Calu3 (cell line): ENCODE measurements at regions of chr22 and their contacts with region 1.

Region 1: GRCh38 chr22:37591823-37592404 is 12.0 kb upstream of the LGALS2 start:
- DNase-seq: no peak
- H3K4me3 Mint-ChIP-seq: peak overlapping the region; percentile 20
- H3K27ac Mint-ChIP-seq: peak overlapping the region; percentile 24
- H3K4me1 Mint-ChIP-seq: peaks cover 30% of the 10 kb centered on the region
- H3K27me3 Mint-ChIP-seq: no peaks in the 10 kb centered on the region
- CTCF ChIP-seq: no peak

Region 2: GRCh38 chr22:37492428-37493344 is 99.2 kb before region 1 on chr22:
- CTCF ChIA-PET with region 1: no interaction called
- intact Hi-C with region 1: no loop called
- DNase-seq: peak; percentile 52
- H3K4me3 Mint-ChIP-seq: no peak overlapping the region
- H3K27ac Mint-ChIP-seq: no peak overlapping the region
- H3K4me1 Mint-ChIP-seq: peaks cover 22% of the 10 kb centered on the region
- H3K27me3 Mint-ChIP-seq: no peaks in the 10 kb centered on the region
- CTCF ChIP-seq: peak; percentile 56

Region 3: DNA sequence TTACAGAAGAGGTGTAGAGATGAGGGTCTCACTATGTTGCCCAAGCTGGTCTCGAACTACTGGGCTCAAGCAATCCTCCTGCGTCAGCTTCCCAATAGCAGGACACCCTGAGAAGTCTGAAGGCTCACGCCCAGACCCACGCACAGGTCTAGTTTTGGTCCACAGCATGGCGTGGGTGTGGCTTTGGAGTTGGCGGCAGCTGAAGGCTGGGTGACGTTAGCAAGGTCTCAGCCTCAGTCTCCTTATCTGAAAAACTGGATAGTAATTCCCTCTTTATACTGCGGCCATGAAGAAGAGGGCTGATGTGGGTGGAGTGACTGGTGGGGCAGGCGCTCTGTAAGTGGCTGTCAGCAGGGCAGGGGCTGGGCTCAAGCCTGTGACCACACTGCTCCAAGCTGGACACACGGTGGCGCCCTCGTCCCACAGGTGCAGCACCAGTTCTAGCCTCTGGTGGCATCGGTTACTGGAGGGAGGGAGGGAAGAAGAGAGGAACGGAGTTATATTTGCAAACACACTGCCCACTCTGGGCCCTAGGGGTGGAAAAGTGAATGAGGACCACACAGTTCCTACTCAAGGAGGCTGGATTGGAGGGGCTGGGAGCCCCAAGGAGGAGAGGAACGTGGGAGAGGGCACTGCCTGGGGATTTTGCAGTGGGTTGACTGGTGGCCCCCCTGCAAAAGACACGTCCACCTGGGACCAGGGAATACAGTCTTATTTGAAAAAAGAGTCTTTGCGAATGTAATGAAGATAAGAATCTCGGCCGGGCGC is 53.1 kb before region 1 on chr22:
- CTCF ChIA-PET with region 1: interaction called, 35 read pairs
- intact Hi-C with region 1: loop called (anchors 2 kb)
- DNase-seq: peak; percentile 97
- H3K4me3 Mint-ChIP-seq: peak overlapping the region; percentile 5
- H3K27ac Mint-ChIP-seq: peak overlapping the region; percentile 52
- H3K4me1 Mint-ChIP-seq: peaks cover 48% of the 10 kb centered on the region
- H3K27me3 Mint-ChIP-seq: no peaks in the 10 kb centered on the region
- CTCF ChIP-seq: peak; percentile 97

Region 4: GRCh38 chr22:37544955-37545699 is 46.8 kb before region 1 on chr22:
- CTCF ChIA-PET with region 1: interaction called, 35 read pairs
- intact Hi-C with region 1: no loop called
- DNase-seq: peak; percentile 89
- H3K4me3 Mint-ChIP-seq: peak overlapping the region; percentile 46
- H3K27ac Mint-ChIP-seq: peak overlapping the region; percentile 30
- H3K4me1 Mint-ChIP-seq: peaks cover 63% of the 10 kb centered on the region
- H3K27me3 Mint-ChIP-seq: no peaks in the 10 kb centered on the region
- CTCF ChIP-seq: peak; percentile 75

Region 5: DNA sequence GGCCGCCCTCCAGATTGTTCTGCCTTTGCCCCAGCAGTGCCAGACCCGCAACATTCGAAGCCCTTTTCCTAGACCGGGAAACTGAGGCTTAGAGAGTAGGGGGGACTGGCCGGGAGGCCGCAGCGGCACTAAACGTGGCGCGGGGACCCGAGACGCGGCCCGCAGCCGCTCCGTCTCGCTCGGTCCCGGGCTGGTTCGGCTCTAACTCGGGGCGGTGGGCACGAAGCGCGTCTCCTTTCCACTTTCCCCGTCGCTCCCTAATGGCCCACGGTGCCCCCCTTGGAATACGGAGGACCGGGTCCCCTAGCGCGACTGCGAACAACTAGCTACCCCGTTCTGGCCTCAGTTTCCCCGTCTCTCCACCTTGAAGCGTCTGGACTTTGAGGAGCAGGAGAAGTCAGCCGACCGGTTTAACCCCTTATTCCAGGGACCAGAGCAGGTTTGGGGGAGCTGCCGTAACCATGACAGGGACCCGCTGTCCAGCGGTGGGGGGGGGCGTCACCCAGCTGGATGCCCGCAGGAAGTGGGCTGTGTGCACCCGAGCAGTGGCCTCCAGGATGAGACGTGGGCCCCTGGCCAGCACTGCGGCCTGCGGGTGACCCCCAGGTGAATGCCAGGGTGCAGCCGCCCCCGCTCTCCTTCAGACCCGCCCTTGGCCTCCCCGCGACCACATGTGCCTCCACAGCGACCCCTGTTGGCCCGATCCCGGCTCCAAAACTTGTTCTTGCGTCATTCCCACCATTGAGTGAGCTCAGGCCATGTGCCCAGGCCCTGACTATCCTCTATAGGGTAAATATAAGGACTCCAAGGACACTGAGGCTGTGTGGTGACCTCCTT is 30.5 kb before region 1 on chr22:
- CTCF ChIA-PET with region 1: interaction called, 48 read pairs
- intact Hi-C with region 1: no loop called
- DNase-seq: peak; percentile 97
- H3K4me3 Mint-ChIP-seq: peak overlapping the region; percentile 87
- H3K27ac Mint-ChIP-seq: peak overlapping the region; percentile 100
- H3K4me1 Mint-ChIP-seq: peaks cover 82% of the 10 kb centered on the region
- H3K27me3 Mint-ChIP-seq: no peaks in the 10 kb centered on the region
- CTCF ChIP-seq: peak; percentile 90

Region 6: DNA sequence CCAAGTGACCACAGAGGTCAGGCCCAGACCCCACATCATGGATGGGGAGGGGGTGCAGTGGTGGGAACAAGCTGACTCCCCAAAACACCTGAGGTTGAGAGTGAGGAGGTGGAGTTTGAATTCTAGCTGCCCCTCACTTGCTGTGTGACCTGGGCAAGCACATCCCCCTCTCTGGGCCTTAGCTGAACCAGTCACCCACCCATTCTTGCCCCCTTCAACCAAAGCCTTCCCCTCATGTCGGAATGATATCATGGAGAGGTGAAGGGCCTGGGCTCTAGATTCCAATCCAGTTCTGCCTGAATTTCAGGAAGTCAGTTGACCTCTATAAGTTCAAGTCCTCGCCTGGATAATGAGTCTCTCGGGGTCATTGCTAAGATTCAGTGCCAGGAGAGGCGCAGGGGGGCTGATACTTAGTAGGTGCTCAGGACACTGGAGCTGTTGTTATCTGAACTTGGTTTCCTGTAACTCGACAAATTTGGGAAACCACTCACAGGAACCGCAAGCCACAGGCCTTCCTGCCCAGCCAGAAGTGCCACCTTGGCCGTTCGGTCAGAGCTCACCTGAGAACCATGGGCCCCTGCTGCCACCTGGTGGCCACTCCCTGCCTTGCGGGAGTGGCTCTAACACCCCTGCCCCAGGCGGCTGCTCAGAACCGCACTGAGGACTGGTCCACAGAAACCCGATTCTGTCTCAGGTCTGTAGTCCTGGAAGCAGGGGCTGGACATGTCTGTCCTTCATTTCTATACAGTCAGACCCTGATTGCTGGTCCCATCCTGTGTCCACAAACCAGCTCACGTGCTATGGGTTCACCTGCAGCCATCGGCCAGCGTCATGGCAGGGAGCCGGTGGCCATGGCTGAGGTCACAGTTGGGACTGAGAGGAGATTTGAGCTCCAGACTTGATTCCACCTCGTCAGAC is 24.8 kb before region 1 on chr22:
- CTCF ChIA-PET with region 1: interaction called, 48 read pairs
- intact Hi-C with region 1: loop called (anchors 2 kb)
- DNase-seq: peak; percentile 96
- H3K4me3 Mint-ChIP-seq: peak overlapping the region; percentile 87
- H3K27ac Mint-ChIP-seq: peak overlapping the region; percentile 99
- H3K4me1 Mint-ChIP-seq: peaks cover 98% of the 10 kb centered on the region
- H3K27me3 Mint-ChIP-seq: no peaks in the 10 kb centered on the region
- CTCF ChIP-seq: peak; percentile 97

Region 7: GRCh38 chr22:37581504-37581903 is 10.4 kb before region 1 on chr22:
- CTCF ChIA-PET with region 1: interaction called, 23 read pairs
- intact Hi-C with region 1: no loop called
- DNase-seq: peak; percentile 83
- H3K4me3 Mint-ChIP-seq: no peak overlapping the region
- H3K27ac Mint-ChIP-seq: peak overlapping the region; percentile 40
- H3K4me1 Mint-ChIP-seq: peaks cover 21% of the 10 kb centered on the region
- H3K27me3 Mint-ChIP-seq: no peaks in the 10 kb centered on the region
- CTCF ChIP-seq: no peak

Region 8: DNA sequence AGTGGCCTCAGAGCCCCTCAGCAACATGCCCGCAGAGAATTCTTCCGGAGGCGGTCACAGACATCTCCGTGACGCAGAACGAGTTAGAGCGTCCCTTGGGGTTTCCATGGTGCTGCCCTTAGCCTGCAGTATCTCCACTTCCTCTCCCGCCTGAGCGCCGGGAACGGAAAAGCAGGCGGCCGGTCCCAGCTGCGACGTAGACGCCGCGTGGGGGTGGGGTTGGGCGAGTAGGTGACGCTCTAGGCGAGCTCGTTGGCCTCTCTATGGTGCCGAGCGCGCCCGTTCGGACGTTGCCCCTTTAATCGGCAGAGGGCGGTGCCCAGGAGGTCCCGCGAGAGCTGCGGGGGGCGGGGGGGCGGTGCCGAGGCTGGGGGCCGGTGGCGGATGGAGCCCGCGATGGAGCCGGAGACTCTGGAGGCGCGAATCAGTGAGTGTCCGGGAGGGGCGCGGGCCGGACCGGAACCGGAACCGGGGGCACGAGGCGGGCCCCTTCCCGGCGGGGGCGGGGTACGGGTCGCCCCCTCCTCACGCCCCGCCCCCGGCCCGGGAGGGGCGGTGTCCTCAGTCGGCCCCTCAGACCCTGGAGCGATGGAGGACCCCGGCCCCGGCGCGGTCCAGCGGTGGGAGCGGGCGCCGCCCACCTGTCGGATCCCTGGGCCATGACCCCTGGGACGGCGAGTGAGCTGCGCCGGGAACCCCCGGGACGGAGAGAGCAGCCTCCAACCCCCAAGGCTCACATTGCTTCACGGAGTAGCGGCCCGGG is 16.7 kb after region 1 on chr22 and contains the start of gene GGA1:
- CTCF ChIA-PET with region 1: interaction called, 38 read pairs
- intact Hi-C with region 1: no loop called
- DNase-seq: peak; percentile 95
- H3K4me3 Mint-ChIP-seq: peak within 1 kb of the TSS; percentile 89
- H3K27ac Mint-ChIP-seq: peak within 1 kb of the TSS; percentile 87
- H3K4me1 Mint-ChIP-seq: peaks cover 10% of the 10 kb centered on the region
- H3K27me3 Mint-ChIP-seq: no peaks in the 10 kb centered on the region
- CTCF ChIP-seq: no peak
- total RNA-seq, gene GGA1: 89.8 and 95.3 TPM in 2 replicates